ENCODE measurements at regions of chr7 and their contacts with region 1.

Region 1: GRCh38 chr7:105759670-105760550 is 116.5 kb downstream of the ATXN7L1 start:
- DNase-seq: peak in 2 of 9 donors; percentile 21 to 24
- ATAC-seq: peak; percentile 52
- H3K4me3 ChIP-seq: no peak overlapping the region
- H3K4me3 Mint-ChIP-seq: peak overlapping the region in 8 of 10 donors; percentile 1 to 82 (median 54)
- H3K27ac ChIP-seq: no peak overlapping the region
- H3K27ac Mint-ChIP-seq: peak overlapping the region in 8 of 9 donors; percentile 32 to 90 (median 76)
- H3K4me1 ChIP-seq: peaks cover 31 to 32% of the 10 kb centered on the region in 2 donors
- H3K4me1 Mint-ChIP-seq: peaks cover 22 to 53% (median 43%) of the 10 kb centered on the region in 7 donors
- H3K27me3 ChIP-seq: no peaks in the 10 kb centered on the region
- H3K27me3 Mint-ChIP-seq: peaks cover 0 to 11% (median 0%) of the 10 kb centered on the region in 5 donors

Region 2: GRCh38 chr7:105808703-105809590 is 49.0 kb after region 1 on chr7:
- CTCF ChIA-PET with region 1: interaction called, 6 read pairs
- POLR2A ChIA-PET with region 1: interaction called, 4 read pairs
- intact Hi-C with region 1: loop called in 1 of 2 experiments (anchors 2 kb)
- DNase-seq: peak; percentile 11 to 77 (median 38)
- ATAC-seq: peak; percentile 94
- H3K4me3 ChIP-seq: peak overlapping the region; percentile 25
- H3K4me3 Mint-ChIP-seq: peak overlapping the region in 8 of 10 donors; percentile 1 to 68 (median 31)
- H3K27ac ChIP-seq: peak overlapping the region; percentile 15
- H3K27ac Mint-ChIP-seq: peak overlapping the region in 8 of 9 donors; percentile 0 to 93 (median 45)
- H3K4me1 ChIP-seq: peaks cover 33 to 50% of the 10 kb centered on the region in 2 donors
- H3K4me1 Mint-ChIP-seq: peaks cover 40 to 73% (median 65%) of the 10 kb centered on the region in 7 donors
- H3K27me3 ChIP-seq: no peaks in the 10 kb centered on the region
- H3K27me3 Mint-ChIP-seq: no peaks in the 10 kb centered on the region

Region 3: DNA sequence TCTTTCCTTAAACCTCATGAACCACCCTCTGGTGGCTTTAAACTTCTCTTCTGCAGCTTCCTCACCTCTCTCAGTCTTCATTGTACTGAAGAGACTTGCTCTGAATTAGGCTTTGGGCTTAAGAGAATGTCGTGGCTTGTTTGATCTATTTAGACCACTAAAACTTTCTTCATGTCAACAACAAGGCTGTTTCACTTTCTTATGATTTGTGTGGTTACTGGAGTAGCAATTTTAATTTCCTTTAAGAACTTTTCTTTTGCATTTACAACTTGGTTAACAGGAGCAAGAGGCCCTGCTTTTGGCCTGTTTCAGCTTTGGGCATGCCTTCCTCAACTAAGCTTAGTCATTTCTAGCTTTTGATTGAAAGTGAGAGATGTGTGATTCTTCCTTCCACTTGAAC is 165.0 kb after region 1 on chr7:
- CTCF ChIA-PET with region 1: interaction called, 4 read pairs
- POLR2A ChIA-PET with region 1: interaction called, 5 read pairs
- intact Hi-C with region 1: loop called in 1 of 2 experiments (anchors 2 kb)
- DNase-seq: peak in 7 of 9 donors; percentile 36 to 84 (median 74)
- ATAC-seq: peak; percentile 90
- H3K4me3 ChIP-seq: no peak overlapping the region
- H3K4me3 Mint-ChIP-seq: peak overlapping the region; percentile 6 to 65 (median 33)
- H3K27ac ChIP-seq: peak overlapping the region; percentile 46
- H3K27ac Mint-ChIP-seq: peak overlapping the region; percentile 47 to 92 (median 84)
- H3K4me1 ChIP-seq: peaks cover 12 to 18% of the 10 kb centered on the region in 2 donors
- H3K4me1 Mint-ChIP-seq: peaks cover 20 to 46% (median 40%) of the 10 kb centered on the region in 7 donors
- H3K27me3 ChIP-seq: no peaks in the 10 kb centered on the region
- H3K27me3 Mint-ChIP-seq: peaks cover 0 to 38% (median 0%) of the 10 kb centered on the region in 5 donors

Region 4: GRCh38 chr7:106041140-106041717 is 281.3 kb after region 1 on chr7:
- CTCF ChIA-PET with region 1: interaction called, 107 read pairs
- POLR2A ChIA-PET with region 1: interaction called, 4 read pairs
- intact Hi-C with region 1: loop called (anchors 1 kb)
- DNase-seq: peak in 3 of 9 donors; percentile 22 to 32 (median 25)
- ATAC-seq: peak; percentile 56
- H3K4me3 ChIP-seq: no peak overlapping the region
- H3K4me3 Mint-ChIP-seq: peak overlapping the region in 8 of 10 donors; percentile 5 to 68 (median 58)
- H3K27ac ChIP-seq: no peak overlapping the region
- H3K27ac Mint-ChIP-seq: peak overlapping the region in 8 of 9 donors; percentile 32 to 91 (median 73)
- H3K4me1 ChIP-seq: peaks cover 5 to 33% of the 10 kb centered on the region in 2 donors
- H3K4me1 Mint-ChIP-seq: peaks cover 18 to 58% (median 38%) of the 10 kb centered on the region in 7 donors
- H3K27me3 ChIP-seq: no peaks in the 10 kb centered on the region
- H3K27me3 Mint-ChIP-seq: peaks cover 0 to 48% (median 0%) of the 10 kb centered on the region in 5 donors

Region 5: DNA sequence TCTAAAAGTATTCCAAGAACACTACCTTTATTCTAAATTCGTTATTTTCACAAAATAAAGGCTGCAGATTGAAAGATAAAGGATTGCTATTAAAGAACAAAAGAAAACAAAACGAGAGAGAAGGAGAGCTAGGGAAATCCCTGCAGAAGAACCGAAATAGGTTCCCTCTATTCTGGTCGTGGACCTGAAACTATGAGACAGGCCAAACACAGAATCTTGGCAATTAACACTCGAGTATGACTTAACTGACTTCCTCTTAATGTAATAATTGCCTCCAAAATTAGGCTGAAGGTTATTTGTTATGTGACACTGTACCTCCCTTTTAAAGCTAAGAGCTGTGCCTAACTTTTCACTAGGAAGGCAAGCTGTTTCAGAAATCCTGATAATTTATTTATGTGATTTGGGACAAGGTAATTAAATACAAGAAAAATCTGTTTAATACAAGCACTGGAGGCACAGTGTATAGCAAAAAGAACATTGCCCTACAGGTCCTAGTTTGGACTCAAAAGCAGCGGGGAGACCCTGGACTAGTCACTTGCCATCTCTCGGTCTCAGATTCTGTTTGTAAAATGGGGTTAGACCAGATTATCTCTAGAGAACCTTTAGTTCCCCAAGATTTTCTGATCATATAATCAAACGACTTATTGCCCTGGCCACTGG is 513.2 kb after region 1 on chr7:
- CTCF ChIA-PET with region 1: no interaction called
- POLR2A ChIA-PET with region 1: no interaction called
- intact Hi-C with region 1: no loop called
- DNase-seq: no peak
- ATAC-seq: peak; percentile 6
- H3K4me3 ChIP-seq: no peak overlapping the region
- H3K4me3 Mint-ChIP-seq: no peak overlapping the region
- H3K27ac ChIP-seq: no peak overlapping the region
- H3K27ac Mint-ChIP-seq: no peak overlapping the region
- H3K4me1 ChIP-seq: no peaks in the 10 kb centered on the region
- H3K4me1 Mint-ChIP-seq: peaks cover 0 to 17% (median 3%) of the 10 kb centered on the region in 7 donors
- H3K27me3 ChIP-seq: no peaks in the 10 kb centered on the region
- H3K27me3 Mint-ChIP-seq: no peaks in the 10 kb centered on the region